Activated B cell treated with CpG ODN at 0.5 μM for 24 hours (primary cell): ENCODE measurements at regions of chr1 and their contacts with region 1.

Region 1: GRCh38 chr1:45303582-45304310 is 22.9 kb upstream of the HPDL start:
- DNase-seq: peak; percentile 91
- ATAC-seq: peak; percentile 80
- H3K4me3 Mint-ChIP-seq: peak overlapping the region; percentile 92
- H3K27ac Mint-ChIP-seq: peak overlapping the region; percentile 96
- H3K4me1 Mint-ChIP-seq: peaks cover 43% of the 10 kb centered on the region
- H3K27me3 Mint-ChIP-seq: no peaks in the 10 kb centered on the region
- CTCF ChIP-seq: no peak

Region 2: DNA sequence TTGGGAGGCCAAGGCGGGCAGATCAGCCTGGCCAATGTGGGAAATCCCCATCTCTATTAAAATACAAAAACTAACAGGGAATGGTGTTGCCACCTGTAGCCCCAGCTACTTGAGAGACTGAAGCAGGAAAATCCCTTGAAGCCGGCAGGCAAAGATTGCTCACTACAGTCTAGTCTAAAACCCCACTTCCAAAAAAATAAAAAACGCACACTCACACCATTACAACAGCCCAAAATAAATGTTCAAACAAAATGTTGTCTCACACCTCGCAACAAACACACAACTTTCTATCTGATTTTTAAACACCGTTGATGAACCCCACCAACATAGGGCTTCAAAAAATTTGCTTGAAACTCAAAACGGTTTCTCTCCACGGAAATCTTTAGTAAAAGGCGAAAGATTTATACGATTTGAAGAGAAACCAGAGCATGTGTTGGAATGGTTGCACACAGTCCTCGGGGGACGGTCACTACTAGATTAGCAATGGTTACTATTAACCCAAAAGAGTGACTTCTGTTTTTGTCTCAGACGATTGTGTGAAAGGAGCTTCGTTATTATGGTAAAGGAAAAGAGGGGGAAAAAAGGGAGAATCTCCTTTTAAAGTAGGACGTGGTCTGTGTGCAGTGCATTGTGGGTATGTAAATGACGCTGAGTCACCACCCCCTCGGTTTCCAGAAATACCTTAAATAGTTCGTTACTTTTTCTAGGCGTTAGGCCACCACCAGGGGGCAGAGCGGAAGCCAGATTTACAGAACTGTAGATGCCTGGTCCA is 572.8 kb before region 1 on chr1 and contains the start of gene RNU5D-1:
- CTCF ChIA-PET with region 1: interaction called, 10 read pairs
- POLR2A ChIA-PET with region 1: interaction called, 43 read pairs
- intact Hi-C with region 1: loop called (anchors 1 kb)
- DNase-seq: peak; percentile 84
- ATAC-seq: peak; percentile 71
- H3K4me3 Mint-ChIP-seq: peak within 1 kb of the TSS; percentile 78
- H3K27ac Mint-ChIP-seq: peak within 1 kb of the TSS; percentile 100
- H3K4me1 Mint-ChIP-seq: peaks cover 37% of the 10 kb centered on the region
- H3K27me3 Mint-ChIP-seq: no peaks in the 10 kb centered on the region
- CTCF ChIP-seq: peak; percentile 39
- total RNA-seq, gene RNU5D-1: not detected in 2 replicates

Region 3: DNA sequence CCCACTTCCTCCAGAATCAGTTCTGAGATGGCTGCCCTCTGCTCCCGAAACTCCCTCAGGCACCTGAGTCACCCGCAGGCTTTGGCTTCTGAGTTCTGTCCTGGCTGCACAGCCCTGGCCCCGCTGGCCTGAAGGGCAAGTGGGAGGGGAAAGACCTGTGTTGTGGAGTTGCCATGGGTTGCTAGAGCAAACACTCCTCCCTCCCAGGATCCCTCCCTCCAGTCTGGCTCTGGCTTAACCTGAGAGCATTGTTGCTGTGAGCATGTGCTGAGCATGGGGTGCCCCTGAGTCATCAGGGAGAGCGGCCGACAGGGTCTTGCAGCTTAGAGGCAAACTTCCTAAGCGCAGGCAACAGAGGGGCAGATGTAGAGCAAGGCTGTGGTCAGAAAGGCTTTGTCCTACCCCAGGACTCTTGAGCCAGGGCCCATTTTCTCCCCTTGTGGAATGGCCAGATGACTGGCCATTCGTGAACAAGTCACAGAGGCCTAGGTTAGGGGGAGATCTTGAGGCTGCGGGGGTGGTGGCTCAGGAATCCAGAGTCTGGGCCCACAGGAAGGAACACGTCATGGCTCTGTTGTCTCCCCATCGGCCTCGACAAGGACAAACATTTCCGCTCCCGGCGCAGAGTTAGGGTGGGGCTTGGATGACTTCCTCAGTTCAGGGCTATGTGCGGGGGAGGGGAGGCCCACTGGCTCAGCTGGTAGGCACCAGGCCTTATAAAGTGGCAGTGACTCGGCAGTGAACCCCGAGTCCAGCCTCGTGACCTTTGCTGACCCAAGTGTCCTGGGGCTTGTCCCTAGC is 496.3 kb before region 1 on chr1 and contains the start of gene DYNLT4:
- CTCF ChIA-PET with region 1: no interaction called
- POLR2A ChIA-PET with region 1: interaction called, 15 read pairs
- intact Hi-C with region 1: no loop called
- DNase-seq: peak; percentile 67
- ATAC-seq: peak; percentile 32
- H3K4me3 Mint-ChIP-seq: peak within 1 kb of the TSS; percentile 63
- H3K27ac Mint-ChIP-seq: peak within 1 kb of the TSS; percentile 97
- H3K4me1 Mint-ChIP-seq: peaks cover 67% of the 10 kb centered on the region
- H3K27me3 Mint-ChIP-seq: no peaks in the 10 kb centered on the region
- CTCF ChIP-seq: no peak
- total RNA-seq, gene DYNLT4: not detected in 2 replicates

Region 4: DNA sequence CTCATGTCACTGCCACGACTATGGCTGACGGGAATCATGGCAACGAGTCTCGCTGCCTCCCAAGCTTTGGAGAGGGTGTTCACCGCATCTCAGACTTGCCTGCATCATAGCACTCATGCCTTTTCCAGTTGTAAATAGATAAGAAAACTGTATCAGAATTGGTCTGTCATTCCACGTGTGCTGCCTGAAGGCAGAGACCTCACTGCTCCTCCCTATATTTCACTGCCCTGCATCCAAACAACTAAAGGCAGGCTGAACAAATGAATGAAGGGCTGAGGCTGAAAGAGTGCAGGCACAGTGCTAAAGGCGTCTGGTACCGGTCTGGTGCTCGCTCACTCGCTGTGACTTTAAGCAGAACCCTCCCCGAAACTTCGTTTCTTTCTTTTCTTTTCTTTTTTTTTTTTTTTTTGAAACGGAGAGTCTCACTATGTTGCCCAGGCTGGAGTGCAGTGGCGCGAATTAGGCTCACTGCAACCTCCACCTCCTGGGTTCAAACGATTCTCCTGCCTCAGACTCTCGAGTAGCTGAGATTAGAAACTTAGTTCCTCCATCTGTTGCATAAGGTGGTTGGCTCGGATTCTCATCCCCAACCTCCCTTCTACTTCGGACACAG is 317.9 kb before region 1 on chr1:
- CTCF ChIA-PET with region 1: no interaction called
- POLR2A ChIA-PET with region 1: interaction called, 22 read pairs
- intact Hi-C with region 1: loop called (anchors 1 kb)
- DNase-seq: no peak
- ATAC-seq: no peak
- H3K4me3 Mint-ChIP-seq: peak overlapping the region; percentile 100
- H3K27ac Mint-ChIP-seq: peak overlapping the region; percentile 94
- H3K4me1 Mint-ChIP-seq: peaks cover 23% of the 10 kb centered on the region
- H3K27me3 Mint-ChIP-seq: no peaks in the 10 kb centered on the region
- CTCF ChIP-seq: no peak

Region 5: DNA sequence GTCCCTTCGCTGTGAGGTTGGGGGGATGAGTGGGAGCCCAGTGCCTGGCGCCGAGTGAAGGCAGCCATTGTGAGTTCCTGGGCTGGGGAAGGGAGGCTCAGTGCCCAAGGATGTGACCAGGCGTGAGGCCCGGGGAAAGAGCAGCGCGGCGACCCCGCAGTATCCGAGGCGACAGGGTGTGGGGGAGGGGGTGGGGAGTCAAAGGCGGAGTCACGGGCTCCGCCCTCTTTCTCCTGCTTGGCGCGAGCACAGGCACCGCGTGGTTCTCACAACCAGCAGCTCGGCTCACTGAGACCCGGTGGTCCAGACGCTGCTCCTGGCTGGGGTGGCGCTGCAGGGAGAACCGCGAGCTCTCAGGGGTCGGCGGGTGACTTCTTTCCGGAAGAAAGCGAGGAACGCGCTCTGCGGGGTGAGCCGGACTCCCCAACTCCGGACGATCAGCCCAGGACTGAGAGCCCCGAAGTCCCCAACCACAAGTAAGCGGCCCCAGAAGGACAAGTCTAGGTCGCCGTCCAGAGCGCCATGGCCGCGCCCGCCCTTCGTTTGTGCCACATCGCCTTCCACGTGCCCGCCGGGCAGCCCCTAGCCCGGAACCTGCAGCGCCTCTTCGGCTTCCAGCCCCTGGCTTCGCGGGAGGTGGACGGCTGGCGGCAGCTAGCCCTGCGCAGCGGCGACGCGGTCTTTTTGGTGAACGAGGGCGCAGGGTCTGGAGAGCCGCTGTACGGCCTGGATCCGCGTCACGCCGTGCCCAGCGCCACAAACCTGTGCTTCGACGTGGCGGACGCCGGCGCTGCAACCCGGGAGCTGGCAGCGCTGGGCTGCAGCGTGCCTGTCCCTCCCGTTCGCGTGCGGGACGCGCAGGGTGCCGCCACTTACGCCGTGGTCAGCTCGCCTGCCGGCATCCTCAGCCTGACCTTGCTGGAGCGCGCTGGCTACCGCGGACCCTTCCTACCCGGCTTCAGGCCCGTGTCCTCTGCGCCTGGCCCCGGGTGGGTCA is 23.2 kb after region 1 on chr1 and contains the start of gene HPDL:
- CTCF ChIA-PET with region 1: interaction called, 3 read pairs
- POLR2A ChIA-PET with region 1: interaction called, 24 read pairs
- intact Hi-C with region 1: loop called (anchors 1 kb)
- DNase-seq: peak; percentile 49
- ATAC-seq: peak; percentile 93
- H3K4me3 Mint-ChIP-seq: peak within 1 kb of the TSS; percentile 83
- H3K27ac Mint-ChIP-seq: peak within 1 kb of the TSS; percentile 53
- H3K4me1 Mint-ChIP-seq: peaks cover 18% of the 10 kb centered on the region
- H3K27me3 Mint-ChIP-seq: no peaks in the 10 kb centered on the region
- CTCF ChIP-seq: no peak
- total RNA-seq, gene HPDL: 3.7 and 4.3 TPM in 2 replicates

Region 6: DNA sequence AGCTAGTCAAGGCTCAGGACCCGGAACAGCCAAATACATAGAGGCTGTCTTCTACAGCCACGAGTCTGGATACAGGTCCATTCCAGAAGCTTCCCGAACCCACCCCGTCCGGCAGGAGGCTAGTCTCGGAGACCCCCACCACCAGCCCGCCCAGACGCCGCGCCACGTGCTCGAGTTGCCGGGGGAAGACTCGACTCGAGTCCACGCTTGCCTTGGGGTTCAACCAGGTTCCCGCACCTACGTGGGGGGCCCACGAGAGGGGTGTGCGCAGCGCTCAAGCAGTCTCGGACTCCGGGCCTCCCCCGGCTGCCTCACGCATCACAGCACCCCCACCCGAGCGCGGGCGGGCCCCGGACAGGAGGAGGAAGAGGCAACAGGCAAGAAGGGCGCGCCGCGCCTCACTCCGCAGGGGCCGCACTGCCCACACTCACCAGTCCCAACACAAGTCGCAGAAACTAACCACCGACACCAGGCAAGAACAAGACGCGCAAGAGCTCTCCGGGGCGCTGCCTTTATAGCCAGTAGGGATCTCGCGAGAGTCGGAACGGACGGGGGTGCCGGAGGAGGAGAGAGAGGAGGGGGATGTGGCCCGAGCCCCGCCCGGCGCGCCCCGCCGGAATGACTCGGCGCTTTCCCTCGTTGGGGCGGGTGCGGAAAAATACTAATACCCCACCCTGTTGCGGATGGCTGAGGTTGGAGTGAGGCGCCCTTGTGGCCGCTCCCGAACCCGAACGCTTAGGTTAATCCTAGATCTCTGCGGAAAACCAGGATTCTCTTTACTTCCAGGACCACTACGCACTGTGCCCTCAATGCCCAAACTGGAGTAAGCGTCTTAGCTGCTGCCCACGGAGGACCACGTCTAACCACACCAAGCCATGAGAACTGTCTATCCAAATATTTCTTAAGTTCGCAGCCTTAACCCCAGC is 217.9 kb after region 1 on chr1 and contains the start of gene PRDX1:
- CTCF ChIA-PET with region 1: no interaction called
- POLR2A ChIA-PET with region 1: interaction called, 12 read pairs
- intact Hi-C with region 1: no loop called
- DNase-seq: peak; percentile 98
- ATAC-seq: peak; percentile 87
- H3K4me3 Mint-ChIP-seq: peak within 1 kb of the TSS; percentile 93
- H3K27ac Mint-ChIP-seq: peak within 1 kb of the TSS; percentile 92
- H3K4me1 Mint-ChIP-seq: peaks cover 49% of the 10 kb centered on the region
- H3K27me3 Mint-ChIP-seq: no peaks in the 10 kb centered on the region
- CTCF ChIP-seq: no peak
- total RNA-seq, gene PRDX1: 351 and 413 TPM in 2 replicates